ENCODE measurements at regions of chr4 and their contacts with region 1.

Region 1: GRCh38 chr4:153127760-153128494 is 76.3 kb upstream of the TRIM2 start:
- DNase-seq: peak; percentile 74
- CTCF ChIP-seq: peak; percentile 82

Region 2: DNA sequence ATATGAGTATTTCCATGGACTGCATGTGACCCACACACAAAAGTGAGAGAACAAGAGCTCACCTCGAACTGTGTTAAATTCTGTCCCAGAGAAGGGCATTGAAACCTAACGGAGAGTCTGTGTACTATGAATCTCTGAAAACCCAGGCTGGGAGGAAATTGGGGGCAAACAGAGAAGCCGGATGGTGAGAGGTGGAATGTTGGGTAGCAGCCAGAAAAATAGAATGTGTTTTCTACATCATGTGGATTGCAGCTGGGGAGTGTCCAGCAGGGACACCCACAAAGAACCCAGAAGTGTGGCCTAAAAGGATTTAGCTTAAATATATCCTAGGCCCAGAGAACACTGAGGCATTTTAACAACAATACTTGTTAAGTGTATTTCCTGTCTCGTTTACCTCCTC is 255.2 kb after region 1 on chr4:
- in situ Hi-C with region 1: no loop called
- DNase-seq: no peak
- CTCF ChIP-seq: no peak

Region 3: GRCh38 chr4:153643406-153644383 is 515.8 kb after region 1 on chr4:
- in situ Hi-C with region 1: loop called (anchors 25 kb)
- DNase-seq: peak; percentile 76
- CTCF ChIP-seq: peak; percentile 49

Region 4: GRCh38 chr4:153741541-153741940 is 613.6 kb after region 1 on chr4:
- in situ Hi-C with region 1: no loop called
- DNase-seq: no peak
- CTCF ChIP-seq: no peak